ENCODE measurements at regions of chr15 and their contacts with region 1.

Region 1: GRCh38 chr15:31326156-31326732 is 391 bp upstream of the KLF13 start:
- DNase-seq: peak; percentile 92
- ATAC-seq: peak; percentile 78
- H3K4me3 ChIP-seq: peak overlapping the region; percentile 79
- H3K27ac ChIP-seq: peak overlapping the region; percentile 97
- H3K4me1 ChIP-seq: peaks cover 33% of the 10 kb centered on the region
- H3K27me3 ChIP-seq: no peaks in the 10 kb centered on the region
- CTCF ChIP-seq: no peak
- EP300 ChIP-seq: peak in 1 of 2 experiments; percentile 23; a peak in 2 of 4 replicates
- POLR2A ChIP-seq: peak; percentile 75
- RAD21 ChIP-seq: peak; percentile 22; the same call in 1 of the 2 replicates

Region 2: DNA sequence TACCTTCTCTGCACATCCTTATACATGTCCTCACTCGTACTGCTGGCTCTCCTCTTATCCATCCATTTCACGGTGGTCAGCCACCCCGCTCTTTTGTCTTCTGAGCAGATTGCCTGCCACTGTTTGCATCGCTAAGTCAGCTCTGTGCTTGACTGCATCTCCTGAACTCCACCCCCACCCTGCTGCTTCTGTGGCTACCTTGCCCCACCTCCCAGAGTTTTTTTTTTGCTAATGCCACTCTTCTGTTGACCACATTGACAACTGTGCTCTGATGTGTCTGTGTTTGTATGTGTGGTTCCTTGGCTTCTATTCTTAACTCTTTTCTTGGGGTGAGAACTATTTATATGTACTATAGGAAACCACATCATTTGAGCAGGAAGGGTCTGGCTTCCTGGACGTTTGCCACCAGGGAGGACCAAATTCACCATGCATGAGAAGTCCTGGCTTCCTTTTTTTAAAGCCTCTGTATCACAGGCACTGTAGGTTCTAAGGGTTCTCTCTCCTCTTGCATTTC is 322.0 kb before region 1 on chr15:
- CTCF ChIA-PET with region 1: no interaction called
- POLR2A ChIA-PET with region 1: no interaction called
- RAD21 ChIA-PET with region 1: no interaction called
- SMC1A ChIA-PET with region 1: no interaction called
- in situ Hi-C with region 1: loop called (anchors 10 kb)
- intact Hi-C with region 1: loop called (anchors 10 kb)
- DNase-seq: peak; percentile 99
- ATAC-seq: peak; percentile 95
- H3K4me3 ChIP-seq: 0 out of 2 replicates have a peak overlapping the region, but pooled peaks have one; percentile 14
- H3K27ac ChIP-seq: peak overlapping the region; percentile 29
- H3K4me1 ChIP-seq: peaks cover 19% of the 10 kb centered on the region
- H3K27me3 ChIP-seq: no peaks in the 10 kb centered on the region
- CTCF ChIP-seq: no peak
- EP300 ChIP-seq: peak; percentile 74 to 92; a peak in 3 of 4 replicates
- POLR2A ChIP-seq: peak; percentile 52; the same call in 1 of the 2 replicates
- RAD21 ChIP-seq: 0 out of 2 replicates have a peak, but pooled peaks have one; percentile 15

Region 3: DNA sequence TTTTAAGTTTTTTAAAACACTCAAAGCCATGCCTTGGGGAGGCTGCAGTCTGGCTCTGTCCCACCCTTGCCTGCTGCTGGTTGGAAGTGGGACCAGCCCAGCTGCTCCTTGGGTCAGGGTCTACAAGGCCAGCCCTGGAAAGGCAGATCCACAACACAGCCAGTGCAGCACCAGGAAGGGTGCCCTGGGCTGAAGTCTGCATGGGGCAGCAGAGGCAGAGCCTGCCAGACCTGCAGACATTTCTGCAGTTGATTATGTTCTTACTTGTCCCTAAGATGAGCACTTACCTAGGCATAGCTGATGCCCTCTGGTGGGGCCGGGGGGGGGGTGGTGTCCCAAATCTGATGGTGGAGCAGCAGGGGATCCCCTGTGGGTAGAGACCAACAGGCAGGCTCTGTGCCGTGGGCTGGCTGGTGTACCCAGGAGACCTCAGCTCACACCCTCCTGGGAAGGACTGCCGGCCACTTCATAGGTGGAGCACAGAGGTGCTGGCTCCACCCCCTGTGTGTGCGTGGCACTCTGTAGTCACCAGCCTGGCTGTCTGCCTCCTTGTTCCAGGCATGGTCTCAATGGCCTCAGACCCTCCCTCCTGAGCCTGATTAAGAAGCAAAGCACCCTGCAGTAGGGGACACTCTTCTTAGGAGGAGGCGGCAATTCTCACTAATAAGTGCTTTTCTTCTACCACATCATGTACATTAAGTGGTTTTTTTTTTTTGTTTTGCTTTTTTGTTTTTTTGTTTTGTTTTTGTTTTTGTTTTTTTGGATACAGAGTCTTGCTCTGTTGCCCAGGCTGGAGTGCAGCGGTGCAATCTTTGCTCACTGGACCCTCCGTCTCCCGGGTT is 97.0 kb before region 1 on chr15:
- CTCF ChIA-PET with region 1: interaction called, 23 read pairs
- POLR2A ChIA-PET with region 1: interaction called, 73 read pairs
- RAD21 ChIA-PET with region 1: interaction called, 68 read pairs
- SMC1A ChIA-PET with region 1: interaction called, 52 read pairs
- in situ Hi-C with region 1: loop called (anchors 5 kb)
- intact Hi-C with region 1: loop called (anchors 1 kb)
- DNase-seq: peak; percentile 91
- ATAC-seq: peak; percentile 83
- H3K4me3 ChIP-seq: peak overlapping the region; percentile 86
- H3K27ac ChIP-seq: peak overlapping the region; percentile 80
- H3K4me1 ChIP-seq: peaks cover 37% of the 10 kb centered on the region
- H3K27me3 ChIP-seq: no peaks in the 10 kb centered on the region
- CTCF ChIP-seq: no peak
- EP300 ChIP-seq: 0 out of 4 replicates have a peak, but pooled peaks of 1 of the 2 experiments have one; percentile 27
- POLR2A ChIP-seq: peak; percentile 85
- RAD21 ChIP-seq: no peak

Region 4: DNA sequence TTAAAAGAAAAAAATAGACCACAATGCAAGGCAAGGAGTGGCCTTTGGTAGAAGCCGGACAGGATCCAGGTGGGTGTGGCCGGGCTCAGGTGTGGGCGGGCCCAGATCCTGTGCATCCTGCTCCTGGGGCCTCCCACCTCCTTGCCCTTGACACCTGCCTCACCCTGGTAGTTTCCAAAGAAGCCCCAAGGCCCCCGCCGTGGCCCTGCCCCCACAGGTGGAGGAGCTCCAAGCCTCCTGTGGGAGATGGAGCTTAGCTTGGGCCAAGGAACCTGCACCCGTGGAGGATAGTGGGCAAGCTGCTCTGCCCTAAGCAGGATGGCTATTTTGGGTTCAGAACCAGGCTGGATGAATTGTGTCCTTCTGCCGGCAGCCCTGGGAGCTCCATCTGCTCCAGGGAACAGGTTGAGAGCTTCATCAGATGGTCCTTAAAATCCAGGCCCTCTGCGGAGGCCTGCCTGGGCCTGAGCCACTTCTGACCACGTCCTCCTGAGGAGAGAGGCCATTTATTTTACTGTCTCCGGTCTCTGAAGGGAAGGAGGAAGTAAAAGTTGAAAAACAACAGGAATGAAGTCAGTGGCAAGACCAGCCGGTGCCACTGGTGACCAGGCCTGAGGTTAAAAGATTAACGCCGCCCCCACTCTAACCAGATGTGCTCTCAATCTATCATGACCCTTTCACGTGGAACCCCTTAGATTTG is 53.5 kb before region 1 on chr15:
- CTCF ChIA-PET with region 1: interaction called, 3 read pairs
- POLR2A ChIA-PET with region 1: interaction called, 112 read pairs
- RAD21 ChIA-PET with region 1: interaction called, 4 read pairs
- SMC1A ChIA-PET with region 1: interaction called, 83 read pairs
- in situ Hi-C with region 1: loop called (anchors 10 kb)
- intact Hi-C with region 1: no loop called
- DNase-seq: no peak
- ATAC-seq: peak; percentile 27
- H3K4me3 ChIP-seq: no peak overlapping the region
- H3K27ac ChIP-seq: no peak overlapping the region
- H3K4me1 ChIP-seq: peaks cover 7% of the 10 kb centered on the region
- H3K27me3 ChIP-seq: no peaks in the 10 kb centered on the region
- CTCF ChIP-seq: no peak
- EP300 ChIP-seq: no peak
- POLR2A ChIP-seq: no peak
- RAD21 ChIP-seq: no peak

Region 5: GRCh38 chr15:31338879-31339557 is 12.8 kb after region 1 on chr15:
- CTCF ChIA-PET with region 1: interaction called, 3 read pairs
- POLR2A ChIA-PET with region 1: interaction called, 10 read pairs
- RAD21 ChIA-PET with region 1: interaction called, 14 read pairs
- SMC1A ChIA-PET with region 1: interaction called, 11 read pairs
- in situ Hi-C with region 1: no loop called
- intact Hi-C with region 1: loop called (anchors 1 kb)
- DNase-seq: peak; percentile 75
- ATAC-seq: peak; percentile 81
- H3K4me3 ChIP-seq: peak overlapping the region; percentile 22; the same call in 1 of the 2 replicates
- H3K27ac ChIP-seq: peak overlapping the region; percentile 83
- H3K4me1 ChIP-seq: peaks cover 91% of the 10 kb centered on the region
- H3K27me3 ChIP-seq: no peaks in the 10 kb centered on the region
- CTCF ChIP-seq: no peak
- EP300 ChIP-seq: peak in 1 of 2 experiments; percentile 19; a peak in 2 of 4 replicates
- POLR2A ChIP-seq: no peak
- RAD21 ChIP-seq: no peak

Region 6: DNA sequence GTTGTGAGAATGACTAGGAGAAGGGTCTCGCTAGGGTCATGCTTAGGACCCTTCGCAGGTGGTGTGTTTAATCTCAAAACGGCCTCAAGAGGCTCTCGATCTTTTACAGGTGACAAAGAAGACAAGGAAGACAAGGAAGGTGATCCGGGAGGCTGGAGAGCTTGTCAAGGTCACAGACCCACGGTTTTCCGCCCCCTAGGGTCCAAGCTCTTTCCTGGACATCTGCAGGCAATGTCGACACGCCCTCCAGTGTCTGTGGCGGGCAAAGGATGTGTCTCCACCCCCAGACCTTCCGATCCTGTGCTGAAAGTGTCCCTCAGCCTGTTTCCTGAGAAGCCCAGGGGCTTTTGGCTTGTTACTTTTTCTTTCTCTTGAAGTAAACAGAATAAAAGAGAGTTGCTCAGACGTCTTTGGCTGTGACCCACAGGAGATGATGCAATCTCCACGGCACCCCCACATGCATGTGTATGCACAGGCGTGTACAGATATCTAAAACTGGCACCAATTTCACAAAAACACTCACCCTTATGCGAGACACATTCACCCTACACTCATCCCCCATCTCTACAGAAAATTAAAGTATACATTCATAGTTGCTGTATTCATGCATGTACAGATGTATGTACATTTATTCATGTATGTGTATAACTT is 109.1 kb after region 1 on chr15:
- CTCF ChIA-PET with region 1: interaction called, 33 read pairs
- POLR2A ChIA-PET with region 1: interaction called, 7 read pairs
- RAD21 ChIA-PET with region 1: interaction called, 52 read pairs
- SMC1A ChIA-PET with region 1: interaction called, 23 read pairs
- in situ Hi-C with region 1: no loop called
- intact Hi-C with region 1: loop called (anchors 2 kb)
- DNase-seq: peak; percentile 87
- ATAC-seq: peak; percentile 85
- H3K4me3 ChIP-seq: peak overlapping the region; percentile 48
- H3K27ac ChIP-seq: peak overlapping the region; percentile 95
- H3K4me1 ChIP-seq: peaks cover 50% of the 10 kb centered on the region
- H3K27me3 ChIP-seq: no peaks in the 10 kb centered on the region
- CTCF ChIP-seq: peak; percentile 85 to 100 (median 92); a peak in 5 of 6 replicates
- EP300 ChIP-seq: peak in 1 of 2 experiments; percentile 43; a peak in 1 of 4 replicates
- POLR2A ChIP-seq: peak; percentile 31
- RAD21 ChIP-seq: peak; percentile 86